SK-N-SH (cell line): ENCODE measurements at regions of chr20 and their contacts with region 1.

Region 1: DNA sequence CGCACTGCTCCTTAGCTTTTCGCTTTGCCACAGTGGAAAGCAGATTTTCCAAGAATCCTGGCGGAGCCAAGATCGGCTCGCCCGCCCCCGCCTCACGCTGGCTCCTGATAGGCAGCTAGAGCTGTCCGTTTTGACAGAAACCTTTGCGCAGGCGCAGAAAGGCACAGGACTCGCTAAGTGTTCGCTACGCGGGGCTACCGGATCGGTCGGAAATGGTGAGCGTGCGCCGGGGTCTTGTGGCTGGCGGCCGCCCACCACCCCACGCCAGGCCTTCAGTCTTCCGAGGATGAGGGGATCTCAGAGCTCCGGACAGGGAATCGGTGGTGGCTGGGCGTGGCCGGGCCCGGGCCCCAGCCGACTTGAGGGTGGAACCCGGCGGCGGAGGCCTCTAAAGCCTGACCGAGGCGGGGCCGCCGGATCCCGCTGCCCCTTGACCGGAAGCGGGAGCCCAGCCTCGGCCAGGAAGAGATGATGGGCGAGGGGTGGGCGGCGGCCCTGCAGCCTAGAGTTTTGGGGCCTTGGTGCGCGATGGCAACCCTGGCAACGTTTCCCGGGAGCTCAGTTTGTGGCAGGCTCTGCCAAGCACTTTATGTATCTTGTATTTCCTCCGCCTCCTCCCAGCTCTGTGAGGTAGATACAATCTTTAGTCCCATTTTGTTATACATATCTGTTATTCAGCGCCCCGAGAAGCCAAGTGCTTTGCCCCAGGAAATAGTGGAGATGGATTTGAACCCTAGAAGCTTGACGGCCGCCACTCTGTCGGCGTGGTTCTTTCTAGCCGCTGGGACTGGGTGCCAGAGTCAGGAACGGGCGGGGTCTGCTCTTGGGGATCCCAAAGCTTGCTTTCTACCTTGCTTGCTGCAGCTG is at the start of gene DYNLRB1:
- DNase-seq: peak; percentile 93
- H3K4me3 ChIP-seq: peak within 1 kb of the TSS; percentile 73 to 92
- H3K27ac ChIP-seq: peak within 1 kb of the TSS; percentile 92
- H3K4me1 ChIP-seq: peaks cover 0 to 9% of the 10 kb centered on the region in 2 experiments; a peak in 2 of 4 replicates
- H3K27me3 ChIP-seq: no peaks in the 10 kb centered on the region
- CTCF ChIP-seq: no peak
- EP300 ChIP-seq: no peak
- RAD21 ChIP-seq: no peak
- polyA plus RNA-seq, gene DYNLRB1: 298 and 402 TPM in 2 replicates

Region 2: GRCh38 chr20:34363062-34363464 is 153.4 kb before region 1 on chr20 and contains the start of gene ITCH:
- CTCF ChIA-PET with region 1: no interaction called
- POLR2A ChIA-PET with region 1: interaction called, 14 read pairs
- DNase-seq: peak; percentile 96
- H3K4me3 ChIP-seq: peak within 1 kb of the TSS; percentile 68 to 92
- H3K27ac ChIP-seq: peak within 1 kb of the TSS; percentile 77 to 89
- H3K4me1 ChIP-seq: peaks cover 2 to 11% of the 10 kb centered on the region in 2 experiments; a peak in 2 of 4 replicates
- H3K27me3 ChIP-seq: no peaks in the 10 kb centered on the region
- CTCF ChIP-seq: no peak
- EP300 ChIP-seq: no peak
- RAD21 ChIP-seq: no peak
- polyA plus RNA-seq, gene ITCH: 3.8 and 4.1 TPM in 2 replicates